ENCODE measurements at regions of chr13 and their contacts with region 1.

Region 1: DNA sequence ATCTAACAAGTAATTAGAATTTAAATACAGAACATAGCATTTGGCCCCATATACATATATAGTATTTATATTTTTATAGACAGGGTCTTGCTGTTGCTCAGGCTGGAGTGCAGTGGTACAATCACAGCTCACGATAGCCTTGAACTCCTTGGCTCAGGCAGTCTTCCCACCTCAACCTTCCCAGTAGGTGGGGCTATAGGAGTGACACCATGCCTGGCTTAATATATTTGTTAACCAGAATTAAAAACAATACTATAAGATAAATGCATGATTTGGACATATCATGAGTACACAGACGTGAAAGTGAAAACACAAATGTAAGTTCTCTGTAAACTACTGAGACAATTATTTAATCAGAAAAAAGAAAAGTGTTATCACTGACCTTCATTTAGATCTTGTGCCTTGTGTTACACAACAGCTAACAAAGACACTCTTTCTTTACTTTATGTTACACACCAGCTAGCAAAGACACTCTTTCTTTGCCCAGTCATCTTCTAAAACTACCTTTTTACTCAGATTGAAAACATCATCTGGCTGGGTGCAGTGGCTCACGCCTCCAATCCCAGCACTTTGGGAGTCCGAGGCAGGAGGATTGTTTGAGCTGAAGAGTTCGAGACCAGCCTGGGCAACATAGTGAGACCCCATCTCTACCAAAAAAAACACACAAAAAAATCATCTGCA is 22.6 kb downstream of the CARS2 start:
- DNase-seq: peak in 8 of 35 experiments; percentile 13 to 47 (median 22)
- ATAC-seq: peak in 3 of 4 experiments; percentile 67 to 71 (median 70)
- H3K4me3 ChIP-seq: no peak overlapping the region
- H3K4me3 Mint-ChIP-seq: no peak overlapping the region
- H3K27ac ChIP-seq: no peak overlapping the region
- H3K27ac Mint-ChIP-seq: no peak overlapping the region
- H3K4me1 ChIP-seq: no peaks in the 10 kb centered on the region
- H3K4me1 Mint-ChIP-seq: peaks cover 0 to 3% (median 1%) of the 10 kb centered on the region in 3 donors
- H3K27me3 ChIP-seq: no peaks in the 10 kb centered on the region
- H3K27me3 Mint-ChIP-seq: no peaks in the 10 kb centered on the region

Region 2: DNA sequence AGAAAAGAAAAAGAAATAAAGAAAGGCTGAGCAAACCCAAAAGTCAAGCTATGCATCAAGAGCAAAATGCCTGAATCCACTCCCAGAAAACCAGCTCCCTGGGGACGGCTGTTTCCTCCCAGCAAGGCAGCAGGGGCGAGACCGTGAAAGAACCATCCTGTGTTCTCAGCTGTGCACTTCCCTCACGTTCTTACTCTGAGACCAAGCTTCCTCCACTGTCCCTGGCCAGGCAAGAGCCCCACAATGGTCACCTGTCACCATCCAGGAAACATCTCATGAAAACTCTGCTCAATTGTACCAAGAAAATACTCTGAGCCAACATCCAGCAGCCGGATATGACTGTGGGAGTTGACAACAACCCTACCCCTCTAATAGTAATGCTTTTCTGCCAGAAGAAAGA is 144.7 kb before region 1 on chr13:
- CTCF ChIA-PET with region 1: no interaction called
- POLR2A ChIA-PET with region 1: no interaction called
- DNase-seq: no peak
- ATAC-seq: no peak
- H3K4me3 ChIP-seq: no peak overlapping the region
- H3K4me3 Mint-ChIP-seq: no peak overlapping the region
- H3K27ac ChIP-seq: no peak overlapping the region
- H3K27ac Mint-ChIP-seq: no peak overlapping the region
- H3K4me1 ChIP-seq: peaks cover 0 to 3% of the 10 kb centered on the region in 2 experiments
- H3K4me1 Mint-ChIP-seq: peaks cover 9 to 15% (median 10%) of the 10 kb centered on the region in 3 donors
- H3K27me3 ChIP-seq: no peaks in the 10 kb centered on the region
- H3K27me3 Mint-ChIP-seq: no peaks in the 10 kb centered on the region

Region 3: DNA sequence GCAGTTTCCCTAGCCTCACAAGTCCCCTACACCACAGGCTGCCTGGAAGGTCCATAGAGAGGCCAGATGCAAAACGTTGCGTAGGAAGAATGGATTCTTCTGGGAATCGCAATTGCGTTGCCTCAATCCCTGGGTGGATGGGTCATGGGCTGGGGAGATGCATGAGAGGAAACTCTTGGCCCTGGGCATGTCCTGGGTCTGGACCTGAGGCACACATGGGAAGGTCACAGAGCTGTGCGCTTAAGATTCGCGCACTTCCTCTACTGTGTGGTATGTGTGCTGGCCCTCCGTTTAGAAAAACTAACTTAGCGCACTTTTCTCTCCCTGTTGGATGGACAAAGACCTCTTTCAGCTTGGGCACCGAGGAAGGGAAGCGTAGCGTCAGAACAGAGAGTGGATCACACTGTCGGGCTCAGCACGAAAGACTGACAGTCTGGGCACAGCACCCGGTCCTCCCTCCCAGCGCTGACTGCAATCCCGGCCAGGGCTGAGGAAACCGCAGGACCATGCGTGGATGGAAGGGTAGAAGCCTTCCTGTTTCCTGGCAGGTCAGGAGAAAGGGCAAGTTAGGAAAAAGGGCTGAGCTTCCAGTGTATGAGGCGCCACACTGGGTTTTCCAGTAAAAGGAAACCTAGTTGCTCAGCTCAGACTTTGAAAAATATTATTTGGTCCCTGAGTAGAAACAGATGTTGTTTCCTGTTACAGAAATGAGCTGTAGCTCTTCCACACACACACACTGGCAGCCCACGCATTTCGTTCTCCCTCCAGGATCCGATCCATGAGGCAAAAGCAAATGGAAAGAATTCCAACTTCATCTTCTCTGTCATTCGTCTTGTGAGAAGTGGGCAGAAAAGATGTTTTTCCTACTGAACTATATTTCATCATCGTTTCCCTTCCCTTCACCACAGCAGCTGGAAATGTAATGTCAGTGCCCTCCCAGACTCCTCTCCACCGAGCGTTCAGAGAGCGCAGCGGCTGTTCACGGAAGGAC is 116.2 kb after region 1 on chr13:
- CTCF ChIA-PET with region 1: interaction called in 1 of 2 experiments, 10 read pairs
- POLR2A ChIA-PET with region 1: no interaction called
- DNase-seq: no peak
- ATAC-seq: no peak
- H3K4me3 ChIP-seq: no peak overlapping the region
- H3K4me3 Mint-ChIP-seq: peak overlapping the region in 1 of 3 donors; percentile 41
- H3K27ac ChIP-seq: no peak overlapping the region
- H3K27ac Mint-ChIP-seq: no peak overlapping the region
- H3K4me1 ChIP-seq: peaks cover 0 to 2% of the 10 kb centered on the region in 2 experiments
- H3K4me1 Mint-ChIP-seq: peaks cover 6 to 14% (median 7%) of the 10 kb centered on the region in 3 donors
- H3K27me3 ChIP-seq: peaks cover 4 to 48% of the 10 kb centered on the region in 2 experiments
- H3K27me3 Mint-ChIP-seq: peaks cover 47 to 63% of the 10 kb centered on the region in 2 donors

Region 4: DNA sequence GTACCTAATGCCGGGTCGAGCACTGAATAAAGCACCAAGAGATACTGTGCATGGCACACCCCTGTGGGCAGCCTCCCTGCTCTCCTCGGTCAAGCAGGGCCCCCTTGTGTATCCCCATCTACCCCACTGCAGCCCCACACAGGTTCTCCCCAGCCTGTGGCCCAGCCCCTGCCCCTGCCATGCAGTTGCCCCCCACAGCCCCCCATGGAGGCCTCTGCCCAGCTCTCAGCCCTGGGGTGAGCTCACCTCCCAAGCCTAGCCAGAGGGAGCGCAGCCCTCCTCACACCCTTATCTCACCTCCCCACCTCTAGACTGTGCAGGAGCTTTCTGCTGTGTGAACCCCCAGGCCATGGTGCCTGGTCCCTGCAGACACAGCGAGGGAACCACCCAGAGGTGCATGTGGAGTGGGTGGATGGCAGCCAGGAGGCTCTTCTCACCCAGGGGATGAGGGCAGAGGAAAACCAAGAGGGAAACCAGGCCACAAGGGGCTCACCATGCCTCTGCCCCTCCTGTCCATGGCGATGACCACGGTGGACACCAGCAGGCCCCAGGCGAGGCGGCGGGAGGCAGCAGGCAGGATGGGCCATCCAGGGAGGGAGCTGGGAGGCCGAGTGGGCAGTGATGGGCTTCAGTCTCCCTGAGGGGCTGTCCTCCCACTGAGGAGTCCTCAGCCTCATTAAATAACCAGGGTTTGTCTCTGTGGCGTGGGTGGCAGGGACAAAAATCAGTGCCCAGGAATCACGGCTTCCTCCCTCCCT is 148.3 kb after region 1 on chr13:
- CTCF ChIA-PET with region 1: no interaction called
- POLR2A ChIA-PET with region 1: no interaction called
- DNase-seq: no peak
- ATAC-seq: no peak
- H3K4me3 ChIP-seq: no peak overlapping the region
- H3K4me3 Mint-ChIP-seq: no peak overlapping the region
- H3K27ac ChIP-seq: no peak overlapping the region
- H3K27ac Mint-ChIP-seq: no peak overlapping the region
- H3K4me1 ChIP-seq: no peaks in the 10 kb centered on the region
- H3K4me1 Mint-ChIP-seq: no peaks in the 10 kb centered on the region
- H3K27me3 ChIP-seq: peaks cover 0 to 16% of the 10 kb centered on the region in 2 experiments
- H3K27me3 Mint-ChIP-seq: peaks cover 10 to 16% of the 10 kb centered on the region in 2 donors

Measured in T-cell (primary cell).